Right cardiac atrium (tissue), 5 donors: ENCODE measurements at regions of chr2 and their contacts with region 1.

Region 1: GRCh38 chr2:191582355-191582754 is 95.6 kb upstream of the NABP1 start:
- DNase-seq: no peak
- ATAC-seq: no peak
- H3K4me3 ChIP-seq: no peak overlapping the region
- H3K27ac ChIP-seq: no peak overlapping the region
- H3K4me1 ChIP-seq: no peaks in the 10 kb centered on the region
- H3K27me3 ChIP-seq: no peaks in the 10 kb centered on the region

Region 2: DNA sequence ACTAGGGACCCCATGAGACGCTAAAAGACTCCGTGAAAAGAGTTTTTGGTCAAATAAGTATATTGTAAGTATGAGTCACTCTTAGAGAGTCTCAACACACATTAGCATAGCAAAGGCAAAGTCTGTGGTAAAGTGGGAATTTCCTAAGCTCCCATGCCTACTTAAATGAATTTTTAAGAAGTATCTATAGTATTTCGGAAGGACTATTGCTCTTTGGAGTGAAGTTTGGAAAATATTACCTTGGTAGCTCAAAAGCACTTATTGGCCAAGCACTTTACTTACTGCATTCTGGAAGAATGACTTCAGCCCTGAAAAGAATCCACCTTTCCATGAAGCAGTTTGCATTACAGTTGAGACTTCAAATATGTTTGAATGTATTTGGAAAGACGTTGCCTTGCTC is 207.4 kb after region 1 on chr2:
- intact Hi-C with region 1: loop called in 1 of 4 experiments (anchors 5 kb)
- DNase-seq: no peak
- ATAC-seq: no peak
- H3K4me3 ChIP-seq: no peak overlapping the region
- H3K27ac ChIP-seq: no peak overlapping the region
- H3K4me1 ChIP-seq: no peaks in the 10 kb centered on the region
- H3K27me3 ChIP-seq: no peaks in the 10 kb centered on the region